A673 (cell line): ENCODE measurements at regions of chr6 and their contacts with region 1.

Region 1: DNA sequence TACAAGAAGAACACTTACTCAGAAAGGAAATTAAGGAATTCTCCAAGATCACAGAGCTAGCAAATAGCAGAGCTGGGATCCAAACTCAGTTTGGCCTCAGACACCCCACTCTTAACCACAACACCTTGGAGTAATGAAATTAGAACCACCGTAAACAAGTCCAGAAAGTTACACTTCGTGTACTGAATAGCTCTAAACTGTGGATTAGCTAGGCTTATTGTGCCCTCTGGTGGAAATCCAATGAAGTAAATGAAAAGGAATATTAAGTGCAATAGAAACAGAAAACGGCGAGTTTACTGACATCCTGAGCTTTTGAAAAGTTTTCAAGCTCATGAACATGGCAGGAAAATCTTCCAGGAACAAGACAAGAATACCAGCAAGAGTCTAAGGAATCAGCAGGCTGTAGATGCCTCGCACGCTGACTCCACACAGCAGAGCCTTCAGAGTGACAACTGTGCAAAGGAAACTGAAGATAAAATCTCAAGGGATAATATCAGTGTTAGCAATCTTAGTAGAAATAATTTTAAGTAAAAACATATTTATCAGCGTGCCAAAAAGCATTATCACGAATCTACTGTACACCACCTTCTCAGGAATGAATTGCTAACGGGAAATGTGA is 34.6 kb downstream of the FBXO5 start:
- DNase-seq: peak; percentile 60
- H3K4me3 ChIP-seq: no peak overlapping the region
- H3K27ac ChIP-seq: no peak overlapping the region
- H3K4me1 ChIP-seq: no peaks in the 10 kb centered on the region
- H3K27me3 ChIP-seq: peaks cover 61% of the 10 kb centered on the region
- CTCF ChIP-seq: peak; percentile 77

Region 2: GRCh38 chr6:152267967-152268845 is 680.1 kb before region 1 on chr6:
- CTCF ChIA-PET with region 1: no interaction called
- POLR2A ChIA-PET with region 1: no interaction called
- intact Hi-C with region 1: loop called (anchors 10 kb)
- DNase-seq: peak; percentile 52
- H3K4me3 ChIP-seq: no peak overlapping the region
- H3K27ac ChIP-seq: no peak overlapping the region
- H3K4me1 ChIP-seq: peaks cover 38% of the 10 kb centered on the region
- H3K27me3 ChIP-seq: no peaks in the 10 kb centered on the region
- CTCF ChIP-seq: peak; percentile 75

Region 3: DNA sequence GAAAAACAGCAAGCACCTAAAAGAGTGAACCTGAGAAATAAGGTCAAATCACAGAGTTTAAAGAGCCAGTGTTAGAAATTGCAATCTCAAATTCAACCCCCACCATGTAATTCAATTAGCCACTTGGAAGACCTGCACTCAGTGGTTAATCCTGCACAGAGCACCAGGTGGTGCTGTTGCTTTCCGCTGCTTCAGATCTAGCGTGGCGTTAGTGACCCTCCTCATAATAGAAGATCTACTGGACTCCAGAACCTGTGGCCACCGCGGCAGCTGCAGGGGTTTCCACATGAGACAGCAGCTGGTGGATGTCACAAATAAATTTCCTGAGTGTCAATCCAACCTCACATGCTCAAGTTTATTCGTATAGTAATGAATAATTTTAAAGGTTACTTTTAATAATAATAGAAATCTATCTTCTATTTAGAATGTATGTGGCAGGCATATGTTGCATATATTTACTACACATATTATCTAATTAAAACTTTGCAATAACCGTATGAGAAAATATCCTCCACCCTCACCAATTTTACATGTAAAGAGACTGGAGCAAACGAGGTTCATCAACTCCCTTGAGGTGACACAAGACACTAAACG is 395.5 kb before region 1 on chr6:
- CTCF ChIA-PET with region 1: interaction called, 4 read pairs
- POLR2A ChIA-PET with region 1: no interaction called
- intact Hi-C with region 1: loop called (anchors 5 kb)
- DNase-seq: peak; percentile 80
- H3K4me3 ChIP-seq: no peak overlapping the region
- H3K27ac ChIP-seq: no peak overlapping the region
- H3K4me1 ChIP-seq: no peaks in the 10 kb centered on the region
- H3K27me3 ChIP-seq: no peaks in the 10 kb centered on the region
- CTCF ChIP-seq: peak; percentile 91

Region 4: DNA sequence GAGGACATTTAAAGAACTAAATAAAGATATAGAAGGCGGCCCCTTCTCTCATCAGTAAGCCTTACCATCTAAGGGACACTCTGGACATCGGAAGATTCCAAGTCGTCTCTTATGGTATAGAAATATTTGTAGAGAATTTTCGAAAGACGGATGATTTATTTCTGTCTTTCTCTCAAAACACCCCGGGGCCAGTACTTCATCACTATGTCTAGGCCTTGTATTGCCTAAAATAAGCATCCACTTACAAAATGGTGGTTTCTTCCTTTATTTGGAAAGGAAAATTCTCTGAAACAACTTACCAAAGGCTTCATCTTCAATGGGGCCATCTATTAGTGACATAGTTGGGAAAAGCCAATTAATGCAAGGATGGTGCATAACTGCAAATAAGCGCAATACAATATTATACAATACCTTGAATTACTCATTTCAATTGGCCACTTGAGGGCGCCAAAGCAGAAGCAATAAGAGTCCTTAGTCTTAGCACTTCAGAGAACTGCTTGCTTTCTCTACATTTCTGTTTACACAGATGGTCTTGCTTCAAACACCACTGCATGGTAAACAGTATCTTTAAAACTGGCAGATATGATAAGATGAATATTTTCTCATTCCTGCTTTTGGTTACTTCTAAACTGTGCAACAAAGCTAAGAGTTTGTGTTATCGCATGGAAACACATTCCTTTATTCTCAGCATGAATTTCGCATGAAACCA is 84.5 kb before region 1 on chr6:
- CTCF ChIA-PET with region 1: interaction called, 9 read pairs
- POLR2A ChIA-PET with region 1: no interaction called
- intact Hi-C with region 1: loop called (anchors 1 kb)
- DNase-seq: peak; percentile 78
- H3K4me3 ChIP-seq: no peak overlapping the region
- H3K27ac ChIP-seq: no peak overlapping the region
- H3K4me1 ChIP-seq: no peaks in the 10 kb centered on the region
- H3K27me3 ChIP-seq: peaks cover 50% of the 10 kb centered on the region
- CTCF ChIP-seq: peak; percentile 75

Region 5: DNA sequence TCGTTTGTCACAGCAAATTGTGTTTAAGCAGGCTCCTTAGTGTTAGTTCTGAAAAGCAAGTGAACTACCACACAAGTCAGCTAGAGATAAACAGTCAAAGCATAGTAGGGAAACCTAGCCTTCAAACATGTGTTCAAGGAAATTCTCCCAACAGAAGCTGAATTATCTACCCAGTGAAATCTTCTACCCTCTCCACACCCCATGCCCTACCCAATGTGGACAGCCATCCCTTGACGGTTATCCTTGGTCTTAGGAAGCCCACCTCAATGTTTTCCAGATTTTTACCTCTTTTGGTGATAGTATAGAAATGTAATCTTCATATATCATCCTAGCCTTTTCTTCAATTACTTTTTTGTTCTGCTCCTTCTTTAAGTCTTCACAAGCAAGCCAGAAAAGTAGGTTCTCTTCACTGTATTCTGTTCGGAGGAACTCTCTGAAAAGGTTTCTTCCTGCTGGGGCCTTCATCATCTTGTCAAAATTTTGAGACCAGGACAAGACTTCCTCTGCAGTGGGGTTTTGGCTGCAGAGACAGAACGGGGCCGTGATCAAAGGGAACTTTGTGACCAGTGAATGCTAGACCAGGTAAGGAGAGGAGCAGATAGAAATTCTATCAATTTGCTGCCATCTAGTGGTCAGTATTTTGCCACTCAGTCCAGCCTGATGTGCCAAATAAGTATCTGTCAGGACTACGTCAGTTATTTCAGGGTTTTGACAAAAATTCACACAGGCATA is 75.9 kb after region 1 on chr6:
- CTCF ChIA-PET with region 1: no interaction called
- POLR2A ChIA-PET with region 1: no interaction called
- intact Hi-C with region 1: loop called (anchors 2 kb)
- DNase-seq: peak; percentile 72
- H3K4me3 ChIP-seq: no peak overlapping the region
- H3K27ac ChIP-seq: no peak overlapping the region
- H3K4me1 ChIP-seq: no peaks in the 10 kb centered on the region
- H3K27me3 ChIP-seq: no peaks in the 10 kb centered on the region
- CTCF ChIP-seq: peak; percentile 84